ENCODE measurements at regions of chr14 and their contacts with region 1.

Region 1: GRCh38 chr14:103104654-103105452 is 10.3 kb downstream of the EXOC3L4 start:
- DNase-seq: no peak
- ATAC-seq: peak; percentile 83
- H3K4me3 ChIP-seq: no peak overlapping the region; a peak in 1 of 4 replicates
- H3K27ac ChIP-seq: no peak overlapping the region; the same call in 1 of the 2 replicates
- H3K4me1 ChIP-seq: peaks cover 25 to 45% of the 10 kb centered on the region in 2 experiments
- H3K27me3 ChIP-seq: no peaks in the 10 kb centered on the region
- CTCF ChIP-seq: peak in 2 of 3 experiments; percentile 94 to 99; a peak in 4 of 6 replicates
- POLR2A ChIP-seq: no peak
- RAD21 ChIP-seq: no peak

Region 2: DNA sequence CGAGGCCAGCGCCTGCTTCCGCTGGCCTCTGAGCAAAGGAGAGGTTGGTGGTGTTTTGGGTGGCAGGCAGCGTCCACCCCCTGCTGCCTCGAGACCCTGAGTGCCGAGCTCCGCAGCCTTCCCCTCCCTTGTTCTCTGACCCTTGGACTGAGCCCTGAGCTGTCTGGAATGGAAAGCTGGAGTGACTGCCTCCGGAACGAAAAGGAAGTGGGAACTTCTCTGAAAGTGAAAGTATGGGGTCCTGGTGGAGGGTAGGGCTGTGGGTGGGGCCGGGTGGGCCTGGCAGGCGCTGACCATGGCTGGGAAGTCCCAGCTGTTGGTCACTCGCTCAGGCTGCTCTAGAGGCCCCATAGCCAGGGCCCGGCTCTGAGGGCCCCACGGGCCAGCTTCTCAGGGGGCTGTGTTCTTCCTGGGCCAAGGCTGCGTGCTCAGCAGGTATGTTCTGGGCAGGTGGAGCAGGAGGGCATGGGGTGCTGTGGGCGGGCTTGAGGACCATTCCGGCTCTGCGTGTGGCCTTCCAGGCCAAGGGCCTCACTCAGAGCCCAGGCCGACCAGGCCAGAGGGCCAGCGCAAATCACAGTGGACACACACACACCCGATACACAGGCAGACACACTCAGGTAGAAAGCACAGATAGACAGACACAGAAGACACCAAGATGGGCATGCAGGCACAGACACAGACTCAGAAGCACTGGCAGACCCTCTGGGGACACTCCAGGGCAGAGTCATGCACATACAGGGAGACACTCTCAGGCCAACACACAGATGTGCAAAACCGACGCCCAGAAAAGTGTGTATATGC is 10.2 kb before region 1 on chr14 and contains the start of gene EXOC3L4:
- CTCF ChIA-PET with region 1: interaction called, 41 read pairs
- POLR2A ChIA-PET with region 1: interaction called, 6 read pairs
- RAD21 ChIA-PET with region 1: no interaction called
- intact Hi-C with region 1: no loop called
- DNase-seq: no peak
- ATAC-seq: no peak
- H3K4me3 ChIP-seq: no peak within 1 kb of the TSS
- H3K27ac ChIP-seq: no peak within 1 kb of the TSS
- H3K4me1 ChIP-seq: peaks cover 8 to 13% of the 10 kb centered on the region in 2 experiments
- H3K27me3 ChIP-seq: no peaks in the 10 kb centered on the region
- CTCF ChIP-seq: no peak
- POLR2A ChIP-seq: no peak
- RAD21 ChIP-seq: no peak
- total RNA-seq, gene EXOC3L4: not detected

Region 3: DNA sequence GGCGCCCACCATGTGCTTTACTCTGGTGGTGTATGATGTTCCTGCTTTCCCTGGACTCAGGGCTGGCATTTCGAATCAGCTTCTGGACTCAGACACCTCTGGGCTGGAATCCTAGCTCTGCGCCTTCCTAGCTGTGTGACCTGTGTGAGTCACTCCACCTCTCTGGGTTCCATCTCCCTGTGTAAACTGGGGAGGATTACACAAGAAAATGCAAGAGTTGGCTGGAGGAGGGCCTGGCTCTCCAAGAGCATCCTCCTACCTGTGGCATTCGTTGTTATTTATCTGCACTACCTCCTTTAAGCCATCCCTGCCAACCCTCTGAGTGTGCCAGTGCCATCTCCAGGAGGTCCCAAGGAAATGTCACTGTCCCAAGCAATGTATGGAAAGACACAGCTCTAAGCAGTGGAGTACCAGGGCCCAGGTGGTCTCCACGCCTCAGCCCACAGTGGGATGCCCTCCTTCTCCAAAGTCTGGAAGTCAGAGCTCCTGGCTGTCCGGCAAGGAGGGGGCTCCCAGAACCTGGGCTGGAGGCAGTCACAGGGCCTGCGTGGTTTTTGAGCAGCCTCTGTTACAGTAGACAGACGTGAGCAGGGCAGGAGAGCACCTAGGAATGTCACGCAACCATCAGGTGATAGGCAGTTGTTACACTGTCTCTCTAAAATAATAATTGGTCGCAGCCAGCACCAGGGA is 11.2 kb after region 1 on chr14:
- CTCF ChIA-PET with region 1: interaction called, 15 read pairs
- POLR2A ChIA-PET with region 1: interaction called, 3 read pairs
- RAD21 ChIA-PET with region 1: interaction called in 1 of 2 experiments, 3 read pairs
- intact Hi-C with region 1: no loop called
- DNase-seq: no peak
- ATAC-seq: peak; percentile 33; the same call in 1 of the 2 replicates
- H3K4me3 ChIP-seq: no peak overlapping the region
- H3K27ac ChIP-seq: no peak overlapping the region; the same call in 1 of the 2 replicates
- H3K4me1 ChIP-seq: peaks cover 24 to 40% of the 10 kb centered on the region in 2 experiments
- H3K27me3 ChIP-seq: no peaks in the 10 kb centered on the region
- CTCF ChIP-seq: no peak
- POLR2A ChIP-seq: no peak
- RAD21 ChIP-seq: no peak

Region 4: GRCh38 chr14:103141119-103141796 is 36.4 kb after region 1 on chr14:
- CTCF ChIA-PET with region 1: interaction called, 17 read pairs
- POLR2A ChIA-PET with region 1: no interaction called
- RAD21 ChIA-PET with region 1: interaction called, 6 to 18 read pairs
- intact Hi-C with region 1: loop called (anchors 1 kb)
- DNase-seq: peak; percentile 73
- ATAC-seq: peak; percentile 77
- H3K4me3 ChIP-seq: no peak overlapping the region
- H3K27ac ChIP-seq: no peak overlapping the region
- H3K4me1 ChIP-seq: peaks cover 20 to 38% of the 10 kb centered on the region in 2 experiments
- H3K27me3 ChIP-seq: no peaks in the 10 kb centered on the region
- CTCF ChIP-seq: peak; percentile 80 to 98 (median 95); a peak in 5 of 6 replicates
- POLR2A ChIP-seq: no peak
- RAD21 ChIP-seq: peak; percentile 79

Region 5: GRCh38 chr14:103185051-103185992 is 80.5 kb after region 1 on chr14:
- CTCF ChIA-PET with region 1: interaction called, 26 read pairs
- POLR2A ChIA-PET with region 1: no interaction called
- RAD21 ChIA-PET with region 1: interaction called, 7 to 8 read pairs
- intact Hi-C with region 1: loop called (anchors 1 kb)
- DNase-seq: peak; percentile 40
- ATAC-seq: peak; percentile 58
- H3K4me3 ChIP-seq: no peak overlapping the region
- H3K27ac ChIP-seq: no peak overlapping the region
- H3K4me1 ChIP-seq: peaks cover 0 to 9% of the 10 kb centered on the region in 2 experiments; a peak in 2 of 4 replicates
- H3K27me3 ChIP-seq: no peaks in the 10 kb centered on the region
- CTCF ChIP-seq: peak; percentile 57 to 72 (median 70)
- POLR2A ChIP-seq: no peak
- RAD21 ChIP-seq: peak; percentile 67

Region 6: DNA sequence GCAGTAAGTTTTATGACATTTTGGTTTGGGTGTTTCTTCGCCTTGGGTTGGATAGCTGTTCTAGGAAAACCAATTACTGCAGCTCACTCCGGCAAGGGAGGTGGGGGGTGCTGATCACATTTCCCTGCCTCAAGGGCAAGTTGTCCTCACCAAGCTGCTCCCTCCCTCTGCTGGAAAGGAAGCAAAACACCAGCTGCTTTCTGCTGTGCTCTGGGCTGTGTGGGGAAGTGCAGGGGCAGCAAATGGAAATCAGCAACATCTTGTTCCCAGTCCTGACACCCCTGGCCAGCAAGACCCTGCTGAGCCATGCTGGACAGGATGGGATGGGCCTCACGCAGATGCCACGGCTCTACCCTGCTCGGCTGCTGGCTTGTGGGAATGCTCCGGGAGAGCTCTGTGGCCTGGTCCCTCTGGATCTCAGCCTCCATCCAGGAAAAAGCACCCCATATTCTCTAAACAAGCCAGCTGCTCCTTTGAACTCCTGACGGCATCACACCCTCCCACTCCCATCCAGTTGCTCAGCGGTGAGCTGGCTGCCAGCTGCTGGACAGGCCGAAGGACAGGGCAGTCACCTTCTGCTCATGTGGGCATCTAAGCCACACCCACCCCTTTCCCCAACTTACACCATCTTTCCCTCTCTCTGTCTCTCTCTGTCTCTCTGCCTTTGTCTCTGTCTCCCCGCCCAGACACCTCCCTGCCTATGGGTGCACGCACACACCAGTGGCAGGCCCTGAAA is 176.8 kb after region 1 on chr14:
- CTCF ChIA-PET with region 1: interaction called, 13 read pairs
- POLR2A ChIA-PET with region 1: no interaction called
- RAD21 ChIA-PET with region 1: interaction called in 1 of 2 experiments, 3 read pairs
- intact Hi-C with region 1: no loop called
- DNase-seq: no peak
- ATAC-seq: peak; percentile 74; the same call in 1 of the 2 replicates
- H3K4me3 ChIP-seq: no peak overlapping the region
- H3K27ac ChIP-seq: no peak overlapping the region
- H3K4me1 ChIP-seq: peaks cover 0 to 8% of the 10 kb centered on the region in 2 experiments; a peak in 3 of 4 replicates
- H3K27me3 ChIP-seq: no peaks in the 10 kb centered on the region
- CTCF ChIP-seq: peak; percentile 20 to 29 (median 25); a peak in 2 of 6 replicates
- POLR2A ChIP-seq: no peak
- RAD21 ChIP-seq: peak; percentile 51

Region 7: DNA sequence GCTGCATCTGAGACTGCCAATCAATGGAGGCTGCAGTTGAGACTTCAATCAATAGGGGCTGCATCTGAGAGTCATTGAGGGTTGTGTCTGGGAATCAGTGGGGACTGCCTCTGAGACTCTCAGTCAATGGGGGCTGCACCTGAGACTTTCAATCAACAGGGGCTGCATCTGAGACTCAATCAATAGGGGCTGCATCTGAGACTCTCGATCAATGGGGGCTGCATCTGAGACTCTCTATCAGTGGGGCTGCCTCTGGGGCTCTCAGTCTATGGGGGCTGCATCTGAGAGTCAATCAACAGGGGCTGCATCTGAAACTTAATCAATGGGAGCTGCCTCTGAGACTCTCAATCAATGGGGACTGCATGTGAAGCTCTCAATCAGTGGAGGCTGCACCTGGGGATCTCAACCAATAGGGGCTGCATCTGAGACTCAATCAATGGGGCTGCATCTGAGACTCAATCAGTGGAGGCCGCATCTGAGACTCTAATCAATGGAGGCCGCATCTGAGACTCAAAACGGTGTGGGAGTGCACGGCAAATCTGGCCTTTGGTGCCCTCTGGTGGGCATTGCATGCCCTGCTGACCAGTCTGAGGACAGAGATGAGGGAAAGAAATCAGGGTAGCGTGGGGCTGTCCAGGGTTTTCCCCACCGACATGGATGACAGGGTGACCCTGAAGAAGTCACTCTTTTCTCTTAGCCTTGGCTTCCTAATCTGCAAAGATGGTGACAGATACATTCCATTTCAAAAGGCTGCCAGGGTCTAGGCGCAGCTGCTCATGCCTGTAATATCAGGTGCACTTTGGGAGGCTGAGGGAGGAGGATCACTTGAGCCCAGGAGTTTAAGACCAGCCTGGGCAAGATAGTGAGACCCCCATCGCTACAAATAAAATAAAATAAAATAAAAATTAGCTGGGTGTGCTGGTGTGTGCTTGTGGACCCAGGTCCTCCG is 187.8 kb after region 1 on chr14:
- CTCF ChIA-PET with region 1: interaction called, 14 read pairs
- POLR2A ChIA-PET with region 1: interaction called, 3 read pairs
- RAD21 ChIA-PET with region 1: interaction called in 1 of 2 experiments, 10 read pairs
- intact Hi-C with region 1: loop called (anchors 1 kb)
- DNase-seq: peak; percentile 45
- ATAC-seq: peak; percentile 95
- H3K4me3 ChIP-seq: no peak overlapping the region
- H3K27ac ChIP-seq: no peak overlapping the region
- H3K4me1 ChIP-seq: peaks cover 0 to 11% of the 10 kb centered on the region in 2 experiments; a peak in 2 of 4 replicates
- H3K27me3 ChIP-seq: no peaks in the 10 kb centered on the region
- CTCF ChIP-seq: peak; percentile 90 to 97 (median 94)
- POLR2A ChIP-seq: no peak
- RAD21 ChIP-seq: peak; percentile 97